Aorta (tissue), 5 donors: ENCODE measurements at regions of chrX and their contacts with region 1.

Region 1: GRCh38 chrX:100674705-100675104 is 30.7 kb downstream of the SRPX2 start:
- DNase-seq: no peak
- ATAC-seq: no peak
- H3K4me3 ChIP-seq: no peak overlapping the region
- H3K27ac ChIP-seq: no peak overlapping the region
- H3K4me1 ChIP-seq: no peaks in the 10 kb centered on the region
- H3K27me3 ChIP-seq: no peaks in the 10 kb centered on the region

Region 2: DNA sequence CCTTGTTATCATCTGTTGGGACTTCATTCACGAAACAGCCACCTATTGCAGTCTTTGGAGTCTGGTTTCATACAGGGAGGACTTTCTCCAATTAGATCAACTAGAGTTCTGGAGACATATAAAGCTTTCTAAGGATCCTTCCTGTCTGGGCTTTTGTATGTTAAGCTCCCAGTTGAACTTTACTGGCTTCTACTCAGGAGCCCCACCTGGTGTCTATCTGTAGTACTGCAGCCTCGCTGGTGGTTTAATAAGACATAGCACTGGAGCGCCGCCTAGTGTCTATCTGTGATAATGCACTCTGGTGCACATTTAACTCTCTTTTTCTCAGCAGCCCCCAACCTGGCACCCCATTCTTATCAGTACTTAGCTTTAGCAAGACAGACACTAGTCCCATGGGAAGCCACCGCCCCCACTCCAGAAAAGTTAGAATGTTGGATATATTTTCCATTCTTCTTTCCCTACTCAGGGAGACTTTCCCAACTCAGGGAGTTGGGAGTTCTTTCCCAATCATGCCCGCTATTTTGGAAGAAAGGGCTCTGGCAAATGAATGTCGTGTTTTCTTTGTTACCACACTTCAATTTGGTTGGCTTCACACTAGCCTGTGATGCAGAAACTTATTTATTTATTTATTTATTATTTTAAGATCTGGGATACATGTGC is 94.1 kb after region 1 on chrX:
- intact Hi-C with region 1: loop called in 1 of 2 experiments (anchors 5 kb)
- DNase-seq: peak; percentile 85 to 91
- ATAC-seq: peak; percentile 91
- H3K4me3 ChIP-seq: no peak overlapping the region
- H3K27ac ChIP-seq: no peak overlapping the region
- H3K4me1 ChIP-seq: no peaks in the 10 kb centered on the region
- H3K27me3 ChIP-seq: no peaks in the 10 kb centered on the region